IMR-90 (cell line): ENCODE measurements at regions of chr3 and their contacts with region 1.

Region 1: GRCh38 chr3:177906126-177906511 is 630.1 kb upstream of the KCNMB2 start:
- DNase-seq: peak; percentile 83
- ATAC-seq: peak; percentile 63
- H3K4me3 ChIP-seq: no peak overlapping the region
- H3K27ac ChIP-seq: peak overlapping the region; percentile 77; the same call in 1 of the 2 replicates
- H3K4me1 ChIP-seq: peaks cover 12% of the 10 kb centered on the region
- H3K27me3 ChIP-seq: no peaks in the 10 kb centered on the region
- CTCF ChIP-seq: 0 out of 2 replicates have a peak, but pooled peaks have one; percentile 17
- POLR2A ChIP-seq: no peak
- RAD21 ChIP-seq: peak; percentile 30

Region 2: DNA sequence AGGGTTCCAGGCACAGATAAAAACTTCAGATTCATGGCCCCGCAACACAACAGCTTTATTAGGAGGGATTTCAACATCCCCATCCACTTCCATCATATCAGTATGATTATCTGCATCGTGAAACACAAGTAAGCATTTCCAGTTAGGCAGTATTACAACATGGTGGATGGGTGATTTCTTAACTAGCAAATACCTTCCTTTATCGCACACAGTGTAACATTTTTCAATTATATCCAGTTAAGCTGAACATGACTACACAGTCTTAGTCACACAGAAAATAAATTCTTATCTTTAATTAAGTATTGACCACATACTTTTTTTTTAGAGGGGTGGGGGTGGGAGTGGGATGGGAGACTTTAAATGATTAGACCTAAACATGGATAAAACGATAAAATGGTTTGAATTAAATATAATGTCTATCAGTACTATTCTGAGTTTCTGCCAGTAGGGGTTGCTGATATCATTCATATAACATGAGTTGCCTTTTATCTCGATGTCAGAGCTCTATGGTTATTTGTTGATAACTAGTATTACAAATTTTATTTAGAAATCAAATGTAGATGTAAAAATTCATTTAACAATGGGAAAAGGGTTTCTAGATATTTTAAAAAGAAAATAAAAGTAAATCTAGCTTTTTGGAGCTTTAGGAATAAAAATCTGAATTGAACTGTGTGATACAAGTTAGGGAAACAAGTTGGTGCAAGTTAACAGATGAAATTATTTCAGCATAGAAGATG is 855.5 kb before region 1 on chr3:
- CTCF ChIA-PET with region 1: no interaction called
- POLR2A ChIA-PET with region 1: no interaction called
- dilution Hi-C with region 1: no loop called
- in situ Hi-C with region 1: no loop called
- intact Hi-C with region 1: loop called (anchors 5 kb)
- DNase-seq: peak; percentile 64
- ATAC-seq: peak; percentile 83
- H3K4me3 ChIP-seq: no peak overlapping the region
- H3K27ac ChIP-seq: no peak overlapping the region; the same call in 1 of the 2 replicates
- H3K4me1 ChIP-seq: no peaks in the 10 kb centered on the region
- H3K27me3 ChIP-seq: no peaks in the 10 kb centered on the region
- CTCF ChIP-seq: peak; percentile 64
- POLR2A ChIP-seq: 0 out of 2 replicates have a peak, but pooled peaks have one; percentile 35
- RAD21 ChIP-seq: peak; percentile 78

Region 3: DNA sequence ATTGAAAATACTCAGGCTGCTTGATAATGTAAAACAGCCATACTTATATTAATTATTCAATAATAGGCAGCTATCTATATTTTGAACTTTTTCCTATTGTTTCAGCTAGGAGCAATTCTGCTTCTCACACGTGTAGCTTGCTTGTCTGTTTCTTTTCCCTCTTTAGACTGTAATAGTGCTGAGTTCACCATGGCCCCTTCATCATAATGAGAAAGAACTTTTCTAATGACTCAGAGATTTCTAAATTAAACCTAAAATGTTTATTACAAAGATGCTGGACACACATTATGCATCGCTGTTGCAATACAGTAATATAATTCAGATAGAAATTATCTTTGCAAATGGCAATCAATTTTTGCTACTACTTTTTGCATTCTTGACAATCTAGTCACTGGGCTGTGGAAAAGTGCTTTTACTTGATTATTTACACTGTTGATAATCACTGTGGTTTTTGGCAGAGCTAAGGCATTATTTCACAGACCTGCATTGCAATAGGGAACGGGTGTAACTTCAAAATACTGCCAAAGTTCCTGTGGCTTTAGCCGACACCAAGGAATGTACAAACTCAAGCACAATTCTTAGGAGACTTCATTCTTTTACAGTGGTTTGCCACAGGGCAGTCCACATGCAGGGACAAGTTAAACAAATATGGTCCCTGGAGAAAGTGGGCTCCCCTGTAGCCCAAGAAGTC is 427.8 kb before region 1 on chr3:
- CTCF ChIA-PET with region 1: no interaction called
- POLR2A ChIA-PET with region 1: no interaction called
- dilution Hi-C with region 1: no loop called
- in situ Hi-C with region 1: no loop called
- intact Hi-C with region 1: loop called (anchors 2 kb)
- DNase-seq: peak; percentile 100
- ATAC-seq: peak; percentile 91
- H3K4me3 ChIP-seq: no peak overlapping the region
- H3K27ac ChIP-seq: peak overlapping the region; percentile 79; the same call in 1 of the 2 replicates
- H3K4me1 ChIP-seq: peaks cover 8% of the 10 kb centered on the region
- H3K27me3 ChIP-seq: no peaks in the 10 kb centered on the region
- CTCF ChIP-seq: no peak
- POLR2A ChIP-seq: no peak
- RAD21 ChIP-seq: peak; percentile 41

Region 4: DNA sequence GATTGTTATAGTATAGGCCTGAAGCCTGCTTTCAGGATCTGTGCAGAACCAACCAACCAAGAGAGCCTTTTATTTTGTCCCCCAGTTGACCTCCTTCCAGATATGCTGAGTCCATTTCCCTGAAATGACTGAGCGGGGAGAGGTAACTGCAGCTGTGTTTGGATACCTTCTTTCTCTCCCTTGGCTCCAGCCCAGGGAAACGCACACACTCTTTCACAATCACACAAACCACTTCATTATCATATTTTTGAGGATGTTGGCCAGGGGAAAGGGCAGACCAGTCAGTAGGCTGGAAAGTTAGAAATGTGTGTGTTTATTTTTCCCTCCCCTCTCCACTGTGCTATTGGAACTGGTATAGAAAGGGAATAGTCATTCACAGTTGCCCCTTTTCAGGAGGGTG is 291.1 kb before region 1 on chr3:
- CTCF ChIA-PET with region 1: no interaction called
- POLR2A ChIA-PET with region 1: no interaction called
- dilution Hi-C with region 1: no loop called
- in situ Hi-C with region 1: no loop called
- intact Hi-C with region 1: loop called (anchors 2 kb)
- DNase-seq: peak; percentile 97
- ATAC-seq: peak; percentile 88
- H3K4me3 ChIP-seq: no peak overlapping the region
- H3K27ac ChIP-seq: no peak overlapping the region; the same call in 1 of the 2 replicates
- H3K4me1 ChIP-seq: peaks cover 20% of the 10 kb centered on the region
- H3K27me3 ChIP-seq: no peaks in the 10 kb centered on the region
- CTCF ChIP-seq: no peak
- POLR2A ChIP-seq: no peak
- RAD21 ChIP-seq: 0 out of 2 replicates have a peak, but pooled peaks have one; percentile 4

Region 5: DNA sequence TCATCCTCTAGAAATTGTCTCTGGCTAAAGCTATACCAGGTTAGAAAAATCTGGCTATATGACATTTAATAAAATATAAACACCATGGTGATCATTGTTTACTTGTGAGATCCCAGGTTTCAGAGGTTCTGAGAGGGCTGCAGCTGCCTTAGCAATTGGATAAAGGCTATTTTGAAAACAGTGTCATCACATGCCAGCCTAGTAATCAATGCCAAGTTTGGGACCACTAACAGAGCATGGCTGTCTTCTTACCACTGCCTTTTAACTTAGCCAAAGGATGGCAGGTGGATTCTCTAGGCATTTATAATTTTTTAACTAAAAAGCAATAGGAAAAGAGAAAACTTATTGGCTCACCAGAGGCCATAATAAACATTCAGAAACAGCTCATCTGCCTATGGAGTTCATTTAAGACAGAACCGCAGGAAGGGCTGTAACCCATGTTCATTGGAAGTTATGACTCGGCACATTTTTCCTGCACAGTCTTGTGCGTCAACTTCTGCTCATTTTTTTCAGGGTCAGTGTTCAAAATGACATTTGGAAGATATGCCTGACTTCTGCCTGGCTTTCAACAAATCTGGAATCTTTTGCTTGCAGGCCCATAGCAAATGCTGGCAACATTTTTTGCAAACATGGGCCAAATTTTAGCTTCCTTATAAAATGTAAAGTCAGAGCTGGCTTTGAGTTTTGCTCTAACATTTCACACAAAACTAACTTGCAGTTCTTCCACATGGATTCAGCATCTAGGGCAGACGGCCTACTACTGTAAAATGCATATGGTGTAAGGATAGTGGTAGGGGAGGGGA is 232.8 kb before region 1 on chr3:
- CTCF ChIA-PET with region 1: no interaction called
- POLR2A ChIA-PET with region 1: no interaction called
- dilution Hi-C with region 1: no loop called
- in situ Hi-C with region 1: no loop called
- intact Hi-C with region 1: loop called (anchors 5 kb)
- DNase-seq: peak; percentile 97
- ATAC-seq: peak; percentile 99
- H3K4me3 ChIP-seq: no peak overlapping the region
- H3K27ac ChIP-seq: peak overlapping the region; percentile 77; the same call in 1 of the 2 replicates
- H3K4me1 ChIP-seq: peaks cover 12% of the 10 kb centered on the region
- H3K27me3 ChIP-seq: no peaks in the 10 kb centered on the region
- CTCF ChIP-seq: no peak
- POLR2A ChIP-seq: no peak
- RAD21 ChIP-seq: no peak

Region 6: DNA sequence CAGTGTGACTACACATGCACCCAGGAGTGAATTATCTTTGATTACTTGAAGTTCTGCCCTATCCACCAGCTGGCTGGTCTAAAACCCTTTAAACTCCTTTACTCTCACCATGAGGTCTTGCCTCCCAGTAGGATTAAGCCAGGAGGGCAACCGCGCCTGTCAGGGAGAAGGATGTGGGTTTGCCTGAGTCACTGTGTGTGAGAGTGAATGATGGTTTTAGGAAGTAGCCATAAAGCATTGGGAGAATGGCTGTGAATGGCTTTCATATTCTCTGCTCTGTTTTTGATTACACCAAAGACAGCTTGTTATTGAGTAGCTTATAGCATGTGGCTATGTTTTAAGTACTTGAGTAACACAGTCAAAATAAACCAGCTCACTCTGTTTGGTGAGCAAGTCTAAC is 71.1 kb before region 1 on chr3:
- CTCF ChIA-PET with region 1: no interaction called
- POLR2A ChIA-PET with region 1: no interaction called
- dilution Hi-C with region 1: no loop called
- in situ Hi-C with region 1: no loop called
- intact Hi-C with region 1: loop called (anchors 2 kb)
- DNase-seq: peak; percentile 94
- ATAC-seq: peak; percentile 71
- H3K4me3 ChIP-seq: no peak overlapping the region
- H3K27ac ChIP-seq: peak overlapping the region; percentile 15; the same call in 1 of the 2 replicates
- H3K4me1 ChIP-seq: peaks cover 19% of the 10 kb centered on the region
- H3K27me3 ChIP-seq: no peaks in the 10 kb centered on the region
- CTCF ChIP-seq: no peak
- POLR2A ChIP-seq: no peak
- RAD21 ChIP-seq: no peak

Region 7: DNA sequence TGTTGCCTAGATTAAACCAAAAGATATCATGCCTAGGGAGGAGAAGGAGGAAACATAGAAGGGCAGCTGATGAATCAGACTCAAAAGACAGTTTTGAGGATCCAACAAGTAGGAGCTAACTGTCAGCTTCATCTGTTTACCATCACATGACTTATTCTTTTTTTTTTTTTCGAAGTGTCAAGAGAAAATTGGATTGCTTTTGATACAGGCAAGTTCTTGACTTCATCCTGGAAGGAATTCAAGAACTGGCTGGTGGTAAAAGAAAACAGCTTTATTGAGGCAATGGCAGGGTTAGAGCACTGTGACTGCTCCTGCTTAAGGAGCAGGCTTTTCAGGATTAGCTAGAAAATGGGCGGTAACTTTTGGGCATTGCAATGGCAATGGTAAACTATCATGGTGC is 402.7 kb after region 1 on chr3:
- CTCF ChIA-PET with region 1: no interaction called
- POLR2A ChIA-PET with region 1: no interaction called
- dilution Hi-C with region 1: no loop called
- in situ Hi-C with region 1: no loop called
- intact Hi-C with region 1: no loop called
- DNase-seq: no peak
- ATAC-seq: no peak
- H3K4me3 ChIP-seq: no peak overlapping the region
- H3K27ac ChIP-seq: no peak overlapping the region
- H3K4me1 ChIP-seq: no peaks in the 10 kb centered on the region
- H3K27me3 ChIP-seq: no peaks in the 10 kb centered on the region
- CTCF ChIP-seq: no peak
- POLR2A ChIP-seq: no peak
- RAD21 ChIP-seq: no peak